ENCODE measurements at regions of chr9 and their contacts with region 1.

Region 1: DNA sequence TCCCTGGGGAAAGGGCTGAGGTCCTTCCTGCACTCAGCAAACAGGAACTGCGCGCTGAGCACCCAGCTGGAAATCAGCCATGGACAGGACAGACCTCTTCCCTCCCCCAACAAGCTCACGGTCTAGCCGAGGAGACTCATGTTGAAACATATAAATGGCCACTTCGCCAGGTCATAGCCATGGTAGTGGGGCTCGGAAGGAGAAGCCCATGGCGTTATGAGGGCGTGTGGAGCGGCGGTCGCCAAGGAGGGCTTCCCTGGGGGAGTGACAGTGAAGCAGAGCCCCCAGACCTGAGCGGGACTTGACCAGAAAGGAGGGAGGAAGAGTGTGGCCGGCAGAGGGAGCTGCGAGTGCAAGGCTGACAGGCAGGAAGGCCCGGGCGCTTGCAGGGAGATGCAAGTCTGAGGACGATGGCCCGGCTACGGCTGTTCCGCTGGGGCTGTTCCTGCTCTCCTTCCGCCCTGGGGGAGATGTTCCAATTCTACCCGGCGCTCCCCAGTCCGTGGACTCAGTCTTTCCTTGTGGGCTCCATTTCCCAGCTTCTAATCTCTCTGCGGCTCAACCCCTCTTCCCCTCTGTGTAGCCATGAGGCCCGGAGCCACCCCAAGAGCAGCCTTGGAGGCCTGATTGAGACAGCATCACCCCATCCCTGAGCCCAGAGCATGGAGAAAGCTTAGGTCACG is 43.9 kb upstream of the PRRC2B start:
- DNase-seq: peak; percentile 23
- H3K4me3 ChIP-seq: peak overlapping the region; percentile 53
- CTCF ChIP-seq: peak; percentile 98

Region 2: GRCh38 chr9:130995086-130996011 is 354.7 kb before region 1 on chr9:
- CTCF ChIA-PET with region 1: no interaction called
- POLR2A ChIA-PET with region 1: no interaction called
- DNase-seq: no peak
- H3K4me3 ChIP-seq: no peak overlapping the region
- CTCF ChIP-seq: no peak

Region 3: GRCh38 chr9:131304687-131305394 is 45.2 kb before region 1 on chr9:
- CTCF ChIA-PET with region 1: no interaction called
- POLR2A ChIA-PET with region 1: no interaction called
- DNase-seq: no peak
- H3K4me3 ChIP-seq: no peak overlapping the region
- CTCF ChIP-seq: no peak

Region 4: GRCh38 chr9:131334629-131335367 is 15.2 kb before region 1 on chr9:
- CTCF ChIA-PET with region 1: interaction called, 94 read pairs
- POLR2A ChIA-PET with region 1: no interaction called
- DNase-seq: no peak
- H3K4me3 ChIP-seq: no peak overlapping the region
- CTCF ChIP-seq: no peak

Region 5: GRCh38 chr9:131366761-131367401 is 16.9 kb after region 1 on chr9:
- CTCF ChIA-PET with region 1: interaction called, 16 read pairs
- POLR2A ChIA-PET with region 1: no interaction called
- DNase-seq: peak; percentile 19
- H3K4me3 ChIP-seq: no peak overlapping the region
- CTCF ChIP-seq: peak; percentile 23

Region 6: GRCh38 chr9:131454028-131454427 is 104.0 kb after region 1 on chr9:
- CTCF ChIA-PET with region 1: interaction called, 10 read pairs
- POLR2A ChIA-PET with region 1: no interaction called
- DNase-seq: no peak
- H3K4me3 ChIP-seq: no peak overlapping the region
- CTCF ChIP-seq: no peak

Region 7: DNA sequence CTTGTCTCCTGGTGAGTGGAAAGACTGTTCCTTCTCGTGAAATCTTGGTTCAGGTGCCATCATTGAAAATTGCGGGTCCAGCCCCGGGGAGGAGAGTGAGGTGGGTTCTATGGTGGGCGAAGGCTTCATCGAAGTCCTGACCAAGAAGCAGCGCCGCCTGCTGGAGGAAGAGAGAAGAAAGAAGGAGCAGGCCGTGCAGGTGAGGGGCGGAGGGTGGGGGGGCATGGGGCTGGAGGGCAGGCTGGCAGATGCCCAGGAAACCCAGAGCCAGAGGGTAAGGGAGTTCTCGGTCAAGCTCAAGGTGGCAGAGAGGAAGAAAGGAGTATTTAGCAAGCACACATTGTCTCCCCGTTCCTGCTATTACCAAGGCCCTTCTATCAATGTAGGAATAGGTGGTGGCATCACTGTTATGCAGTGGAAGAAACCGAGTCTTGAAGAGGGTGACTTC is 128.4 kb after region 1 on chr9:
- CTCF ChIA-PET with region 1: interaction called, 119 read pairs
- POLR2A ChIA-PET with region 1: no interaction called
- DNase-seq: no peak
- H3K4me3 ChIP-seq: no peak overlapping the region
- CTCF ChIP-seq: peak; percentile 57